ENCODE measurements at regions of chr13 and their contacts with region 1.

Region 1: GRCh38 chr13:41652727-41653361 is 195.5 kb downstream of the RGCC start:
- DNase-seq: peak in 1 of 2 experiments; percentile 63
- H3K4me3 ChIP-seq: no peak overlapping the region
- H3K4me3 Mint-ChIP-seq: no peak overlapping the region
- H3K27ac Mint-ChIP-seq: peak overlapping the region; percentile 76
- H3K4me1 ChIP-seq: peaks cover 47% of the 10 kb centered on the region
- H3K4me1 Mint-ChIP-seq: peaks cover 27% of the 10 kb centered on the region
- H3K27me3 ChIP-seq: no peaks in the 10 kb centered on the region
- H3K27me3 Mint-ChIP-seq: no peaks in the 10 kb centered on the region
- CTCF ChIP-seq: peak; percentile 66 to 74

Region 2: GRCh38 chr13:41384755-41385503 is 267.9 kb before region 1 on chr13:
- CTCF ChIA-PET with region 1: interaction called, 10 read pairs
- POLR2A ChIA-PET with region 1: no interaction called
- intact Hi-C with region 1: loop called (anchors 1 kb)
- DNase-seq: no peak
- H3K4me3 ChIP-seq: no peak overlapping the region
- H3K4me3 Mint-ChIP-seq: no peak overlapping the region
- H3K27ac Mint-ChIP-seq: no peak overlapping the region
- H3K4me1 ChIP-seq: no peaks in the 10 kb centered on the region
- H3K4me1 Mint-ChIP-seq: peaks cover 4% of the 10 kb centered on the region
- H3K27me3 ChIP-seq: no peaks in the 10 kb centered on the region
- H3K27me3 Mint-ChIP-seq: no peaks in the 10 kb centered on the region
- CTCF ChIP-seq: peak; percentile 32 to 61

Region 3: DNA sequence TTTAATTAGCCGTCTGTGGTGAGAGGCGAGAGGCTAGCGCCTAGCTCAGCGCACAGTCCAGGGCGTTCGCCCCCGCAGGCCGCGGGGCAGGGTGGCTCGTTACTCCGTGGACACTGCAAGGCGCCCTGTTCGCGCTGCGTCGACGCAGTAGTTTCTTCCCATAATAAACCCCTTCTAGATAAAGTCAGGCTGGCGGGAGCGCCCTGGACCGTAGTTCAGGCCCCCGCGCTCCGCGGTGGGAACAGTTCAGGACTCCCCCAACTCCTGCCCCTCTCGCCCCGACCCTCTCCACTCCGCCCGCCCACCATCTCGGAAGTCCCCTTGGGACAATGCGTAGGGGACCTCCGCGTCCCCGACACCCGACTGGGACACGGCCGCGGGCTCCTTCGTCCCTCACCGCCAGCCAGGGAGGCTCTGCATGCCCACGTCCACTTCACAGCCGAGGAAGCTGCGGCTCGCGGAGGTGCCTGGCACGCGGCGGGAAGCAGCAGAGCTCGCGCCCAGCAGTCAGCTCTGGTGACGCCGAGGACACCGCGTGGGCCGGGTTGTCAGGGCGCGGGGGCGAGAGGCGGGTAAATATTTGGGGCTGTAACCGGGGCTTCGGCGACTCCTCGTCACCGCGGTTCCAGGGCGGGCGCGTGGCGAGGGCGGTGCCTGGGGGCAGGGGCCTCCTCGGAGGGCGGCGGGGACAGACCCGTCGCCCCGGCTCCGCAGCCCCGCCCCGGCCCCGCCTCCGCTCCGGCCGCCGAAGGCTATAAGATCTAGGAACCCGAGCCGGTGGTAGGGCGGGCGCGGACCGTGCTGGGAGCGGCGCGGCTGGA is 195.9 kb before region 1 on chr13 and contains the start of gene RGCC:
- CTCF ChIA-PET with region 1: interaction called, 38 read pairs
- POLR2A ChIA-PET with region 1: no interaction called
- intact Hi-C with region 1: loop called (anchors 1 kb)
- DNase-seq: peak; percentile 86 to 94
- H3K4me3 ChIP-seq: peak within 1 kb of the TSS; percentile 60
- H3K4me3 Mint-ChIP-seq: peak within 1 kb of the TSS; percentile 83
- H3K27ac Mint-ChIP-seq: peak within 1 kb of the TSS; percentile 19
- H3K4me1 ChIP-seq: no peaks in the 10 kb centered on the region
- H3K4me1 Mint-ChIP-seq: peaks cover 21% of the 10 kb centered on the region
- H3K27me3 ChIP-seq: no peaks in the 10 kb centered on the region
- H3K27me3 Mint-ChIP-seq: peaks cover 7% of the 10 kb centered on the region
- CTCF ChIP-seq: no peak
- total RNA-seq, gene RGCC: 65.6 and 70.8 TPM in 2 replicates

Region 4: DNA sequence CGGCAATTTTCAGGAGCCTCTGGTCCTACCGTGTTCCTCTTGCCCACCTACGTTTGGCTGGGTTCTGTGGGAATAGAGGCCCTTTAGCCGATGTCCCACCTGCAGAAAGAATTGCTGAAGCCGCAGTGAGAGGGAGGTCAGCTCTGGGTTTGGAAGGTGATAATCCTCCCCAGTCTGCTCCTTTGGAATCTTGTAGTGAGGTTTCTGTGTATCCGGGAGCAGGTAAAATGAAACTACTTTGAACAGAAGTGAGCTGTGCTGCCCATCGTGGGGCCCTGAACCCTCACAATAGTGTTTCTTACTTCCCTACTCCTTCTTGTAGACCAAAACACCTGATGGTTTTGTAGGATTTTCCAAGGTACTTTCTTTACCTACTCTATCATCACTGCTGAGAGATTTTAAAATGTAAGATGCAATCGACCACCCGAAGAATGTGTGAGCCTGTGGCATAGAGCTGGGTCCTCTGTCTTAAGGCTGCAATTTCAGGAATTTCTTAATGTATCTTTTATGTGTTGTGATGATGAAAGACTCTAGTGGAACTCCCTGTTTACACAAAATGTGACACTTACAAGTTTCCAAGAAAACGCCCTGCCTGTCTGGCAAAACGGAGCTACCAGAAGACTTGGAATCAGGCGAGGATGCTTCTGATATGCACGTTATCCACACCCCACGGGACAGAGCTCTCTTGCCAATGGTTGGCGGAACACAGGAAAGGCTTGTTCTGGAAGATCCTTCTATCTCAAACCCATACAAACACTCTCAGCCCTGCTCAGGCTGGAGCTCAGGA is 119.4 kb before region 1 on chr13:
- CTCF ChIA-PET with region 1: no interaction called
- POLR2A ChIA-PET with region 1: no interaction called
- intact Hi-C with region 1: no loop called
- DNase-seq: no peak
- H3K4me3 ChIP-seq: no peak overlapping the region
- H3K4me3 Mint-ChIP-seq: no peak overlapping the region
- H3K27ac Mint-ChIP-seq: no peak overlapping the region
- H3K4me1 ChIP-seq: no peaks in the 10 kb centered on the region
- H3K4me1 Mint-ChIP-seq: no peaks in the 10 kb centered on the region
- H3K27me3 ChIP-seq: no peaks in the 10 kb centered on the region
- H3K27me3 Mint-ChIP-seq: no peaks in the 10 kb centered on the region
- CTCF ChIP-seq: no peak

Region 5: GRCh38 chr13:41613984-41614661 is 38.7 kb before region 1 on chr13:
- CTCF ChIA-PET with region 1: interaction called, 6 read pairs
- POLR2A ChIA-PET with region 1: interaction called, 22 read pairs
- intact Hi-C with region 1: loop called (anchors 1 kb)
- DNase-seq: peak; percentile 78 to 79
- H3K4me3 ChIP-seq: no peak overlapping the region
- H3K4me3 Mint-ChIP-seq: peak overlapping the region; percentile 47
- H3K27ac Mint-ChIP-seq: peak overlapping the region; percentile 84
- H3K4me1 ChIP-seq: peaks cover 70% of the 10 kb centered on the region
- H3K4me1 Mint-ChIP-seq: peaks cover 53% of the 10 kb centered on the region
- H3K27me3 ChIP-seq: no peaks in the 10 kb centered on the region
- H3K27me3 Mint-ChIP-seq: no peaks in the 10 kb centered on the region
- CTCF ChIP-seq: no peak

Region 6: DNA sequence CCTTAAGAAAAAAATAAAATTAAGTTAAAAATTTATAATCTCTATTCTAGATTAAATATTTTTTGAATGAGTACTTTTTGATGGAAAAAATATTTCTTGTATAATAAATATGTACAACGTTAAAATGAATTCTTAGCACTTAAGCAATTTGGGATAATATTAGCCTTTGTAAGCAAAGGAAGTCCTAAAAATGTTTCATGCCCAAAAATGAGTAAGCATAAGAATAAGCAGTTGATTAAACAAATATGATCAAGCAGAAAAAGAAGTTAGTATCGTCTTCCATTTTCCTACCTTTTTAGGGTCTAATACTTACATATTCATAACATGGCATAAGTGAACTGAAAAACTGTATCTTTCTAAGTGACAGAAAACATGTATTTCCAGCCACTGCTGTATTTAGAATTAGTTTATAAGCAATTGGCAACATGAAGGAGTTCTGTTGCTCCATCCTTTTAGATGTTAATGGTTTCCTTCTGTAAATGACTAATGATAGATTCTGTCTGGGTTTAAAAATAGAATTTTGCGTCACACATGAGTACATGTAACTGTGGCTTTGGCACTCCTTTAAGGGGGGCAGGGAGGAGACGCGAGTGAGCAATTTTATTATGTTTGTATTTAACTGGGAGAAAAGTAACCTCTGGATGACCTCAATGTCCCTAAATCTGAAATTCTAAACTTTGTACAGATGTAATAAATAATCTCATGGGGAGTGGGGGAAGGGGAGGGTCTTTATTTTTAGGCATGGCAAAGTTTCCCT is 41.9 kb after region 1 on chr13:
- CTCF ChIA-PET with region 1: interaction called, 4 read pairs
- POLR2A ChIA-PET with region 1: no interaction called
- intact Hi-C with region 1: loop called (anchors 1 kb)
- DNase-seq: peak in 1 of 2 experiments; percentile 42
- H3K4me3 ChIP-seq: no peak overlapping the region
- H3K4me3 Mint-ChIP-seq: peak overlapping the region; percentile 54
- H3K27ac Mint-ChIP-seq: peak overlapping the region; percentile 94
- H3K4me1 ChIP-seq: peaks cover 57% of the 10 kb centered on the region
- H3K4me1 Mint-ChIP-seq: peaks cover 40% of the 10 kb centered on the region
- H3K27me3 ChIP-seq: no peaks in the 10 kb centered on the region
- H3K27me3 Mint-ChIP-seq: no peaks in the 10 kb centered on the region
- CTCF ChIP-seq: no peak

Region 7: DNA sequence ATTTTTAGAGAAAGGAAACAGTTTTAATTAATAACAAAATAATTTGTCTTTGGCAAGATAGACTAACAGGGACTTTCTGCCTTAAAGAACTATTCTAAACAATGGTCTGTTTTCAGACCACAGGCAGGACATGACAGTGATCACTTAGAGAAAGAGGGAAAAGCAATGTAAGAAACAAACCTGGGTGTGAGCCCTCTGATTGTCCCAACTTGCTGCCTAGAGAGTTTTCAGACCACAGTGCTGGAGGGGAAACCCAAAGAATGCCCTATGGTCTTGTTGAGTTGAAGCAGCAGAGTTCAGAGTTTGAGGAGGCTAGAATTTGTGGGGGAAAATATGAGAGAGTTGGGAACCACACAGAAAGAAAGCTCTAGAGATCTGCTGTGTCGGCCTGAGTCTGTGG is 433.7 kb after region 1 on chr13:
- CTCF ChIA-PET with region 1: no interaction called
- POLR2A ChIA-PET with region 1: no interaction called
- intact Hi-C with region 1: no loop called
- DNase-seq: no peak
- H3K4me3 ChIP-seq: no peak overlapping the region
- H3K4me3 Mint-ChIP-seq: no peak overlapping the region
- H3K27ac Mint-ChIP-seq: no peak overlapping the region
- H3K4me1 ChIP-seq: no peaks in the 10 kb centered on the region
- H3K4me1 Mint-ChIP-seq: no peaks in the 10 kb centered on the region
- H3K27me3 ChIP-seq: no peaks in the 10 kb centered on the region
- H3K27me3 Mint-ChIP-seq: peaks cover 10% of the 10 kb centered on the region
- CTCF ChIP-seq: no peak